ENCODE measurements at regions of chr7 and their contacts with region 1.

Region 1: GRCh38 chr7:141654551-141654950 is 47.4 kb downstream of the DENND11 start:
- DNase-seq: peak; percentile 59
- ATAC-seq: peak; percentile 84
- H3K4me3 ChIP-seq: no peak overlapping the region
- H3K27ac ChIP-seq: no peak overlapping the region
- H3K4me1 ChIP-seq: no peaks in the 10 kb centered on the region
- H3K27me3 ChIP-seq: no peaks in the 10 kb centered on the region
- CTCF ChIP-seq: peak; percentile 78

Region 2: GRCh38 chr7:141533149-141533949 is 121.2 kb before region 1 on chr7:
- CTCF ChIA-PET with region 1: no interaction called
- POLR2A ChIA-PET with region 1: no interaction called
- in situ Hi-C with region 1: no loop called
- intact Hi-C with region 1: loop called (anchors 5 kb)
- DNase-seq: peak; percentile 69
- ATAC-seq: peak; percentile 96
- H3K4me3 ChIP-seq: no peak overlapping the region
- H3K27ac ChIP-seq: no peak overlapping the region
- H3K4me1 ChIP-seq: no peaks in the 10 kb centered on the region; the same call in 1 of the 2 replicates
- H3K27me3 ChIP-seq: peaks cover 3% of the 10 kb centered on the region
- CTCF ChIP-seq: peak; percentile 94

Region 3: DNA sequence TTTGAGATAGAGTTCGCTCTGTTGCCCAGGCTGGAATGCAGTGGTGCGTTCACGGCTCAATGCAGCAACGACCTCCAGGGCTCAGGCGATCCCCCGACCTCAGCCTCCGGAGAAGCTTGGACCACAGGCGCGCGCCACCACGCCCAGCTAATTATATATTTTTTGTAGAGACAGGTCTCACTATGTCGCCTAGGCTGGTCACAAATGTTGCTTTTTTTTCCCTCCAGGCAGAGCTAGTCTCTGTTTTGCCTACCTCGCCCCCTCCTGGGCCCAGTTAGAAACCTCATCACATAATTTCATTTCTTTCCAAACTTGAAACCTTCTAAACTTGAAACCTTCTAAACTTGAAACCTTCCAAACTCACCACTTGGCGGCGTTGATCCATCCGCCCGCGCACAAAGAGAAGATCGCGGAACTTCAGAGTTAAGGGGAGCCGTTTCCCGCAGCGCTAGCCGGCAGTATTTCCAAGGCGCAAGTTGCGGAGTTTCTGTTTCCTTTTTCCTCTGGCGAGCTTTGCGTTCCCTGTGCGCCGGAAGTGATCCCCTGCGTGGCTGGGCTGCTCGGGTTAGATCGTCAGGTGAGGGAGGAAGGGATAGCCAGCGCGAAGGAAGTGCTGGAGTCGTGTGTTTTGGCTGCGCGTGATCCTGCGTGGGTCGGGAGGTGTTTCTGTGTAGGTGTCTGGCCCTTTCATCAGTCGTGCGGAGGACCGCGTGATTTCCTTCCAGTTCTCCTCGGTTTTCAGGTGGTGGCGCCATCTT is 83.5 kb after region 1 on chr7 and contains the start of gene SSBP1:
- CTCF ChIA-PET with region 1: interaction called, 5 read pairs
- POLR2A ChIA-PET with region 1: no interaction called
- in situ Hi-C with region 1: no loop called
- intact Hi-C with region 1: loop called (anchors 5 kb)
- DNase-seq: peak; percentile 98
- ATAC-seq: peak; percentile 98
- H3K4me3 ChIP-seq: peak within 1 kb of the TSS; percentile 88 to 100
- H3K27ac ChIP-seq: peak within 1 kb of the TSS; percentile 98
- H3K4me1 ChIP-seq: peaks cover 12% of the 10 kb centered on the region; the same call in 1 of the 2 replicates
- H3K27me3 ChIP-seq: no peaks in the 10 kb centered on the region
- CTCF ChIP-seq: peak; percentile 95
- total RNA-seq, gene SSBP1: 174 TPM

Region 4: DNA sequence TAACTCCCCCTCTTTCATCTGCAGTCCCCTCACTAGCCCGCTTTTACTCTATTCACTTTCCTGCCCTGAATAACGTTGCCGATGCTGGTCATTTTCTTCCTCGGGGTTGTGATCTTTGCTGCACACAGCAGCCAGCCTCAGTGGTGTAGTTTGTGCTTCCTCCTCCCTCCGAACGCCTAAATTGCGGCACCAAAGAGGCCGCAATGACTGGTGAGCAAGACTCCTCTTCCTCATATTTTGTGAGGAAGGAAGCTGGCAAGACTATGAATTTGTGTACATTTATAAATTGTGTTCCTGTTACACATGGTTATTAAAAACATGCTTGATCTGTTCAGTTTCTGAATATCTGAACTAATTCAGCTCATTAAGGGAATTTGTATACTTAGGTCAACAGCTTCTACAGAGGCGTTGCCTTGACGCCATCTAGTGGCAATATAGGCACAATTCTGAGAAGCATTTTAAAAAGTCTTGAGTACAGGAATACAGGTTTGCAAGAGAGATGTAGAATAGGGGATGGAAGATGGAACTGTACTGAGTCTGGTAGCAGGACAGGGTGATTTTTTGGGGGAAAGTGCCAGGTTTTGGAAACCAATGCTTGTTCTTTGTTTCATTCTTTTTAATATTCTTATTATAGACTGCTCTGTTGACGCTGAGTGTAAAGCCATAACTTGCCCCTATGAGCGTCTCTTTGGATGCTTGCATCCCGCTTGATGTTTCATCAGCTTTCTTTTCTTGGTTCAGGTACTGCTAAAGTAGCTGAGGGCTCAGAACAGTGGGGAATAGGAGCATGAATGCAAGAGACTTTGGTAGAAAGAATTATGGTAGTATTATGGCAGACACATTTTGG is 131.4 kb after region 1 on chr7:
- CTCF ChIA-PET with region 1: no interaction called
- POLR2A ChIA-PET with region 1: no interaction called
- in situ Hi-C with region 1: no loop called
- intact Hi-C with region 1: loop called (anchors 5 kb)
- DNase-seq: peak; percentile 51
- ATAC-seq: peak; percentile 91
- H3K4me3 ChIP-seq: no peak overlapping the region
- H3K27ac ChIP-seq: no peak overlapping the region
- H3K4me1 ChIP-seq: no peaks in the 10 kb centered on the region
- H3K27me3 ChIP-seq: no peaks in the 10 kb centered on the region
- CTCF ChIP-seq: peak; percentile 88

Region 5: GRCh38 chr7:141954334-141954733 is 299.8 kb after region 1 on chr7:
- CTCF ChIA-PET with region 1: interaction called, 10 read pairs
- POLR2A ChIA-PET with region 1: no interaction called
- in situ Hi-C with region 1: no loop called
- intact Hi-C with region 1: no loop called
- DNase-seq: no peak
- ATAC-seq: no peak
- H3K4me3 ChIP-seq: no peak overlapping the region
- H3K27ac ChIP-seq: no peak overlapping the region
- H3K4me1 ChIP-seq: no peaks in the 10 kb centered on the region
- H3K27me3 ChIP-seq: no peaks in the 10 kb centered on the region
- CTCF ChIP-seq: no peak

Region 6: GRCh38 chr7:143042159-143042789 is 1387.7 kb after region 1 on chr7:
- CTCF ChIA-PET with region 1: no interaction called
- POLR2A ChIA-PET with region 1: no interaction called
- in situ Hi-C with region 1: no loop called
- intact Hi-C with region 1: no loop called
- DNase-seq: no peak
- ATAC-seq: no peak
- H3K4me3 ChIP-seq: no peak overlapping the region
- H3K27ac ChIP-seq: no peak overlapping the region
- H3K4me1 ChIP-seq: no peaks in the 10 kb centered on the region
- H3K27me3 ChIP-seq: no peaks in the 10 kb centered on the region
- CTCF ChIP-seq: no peak